Heart left ventricle (tissue), 16 donors: ENCODE measurements at regions of chr1 and their contacts with region 1.

Region 1: DNA sequence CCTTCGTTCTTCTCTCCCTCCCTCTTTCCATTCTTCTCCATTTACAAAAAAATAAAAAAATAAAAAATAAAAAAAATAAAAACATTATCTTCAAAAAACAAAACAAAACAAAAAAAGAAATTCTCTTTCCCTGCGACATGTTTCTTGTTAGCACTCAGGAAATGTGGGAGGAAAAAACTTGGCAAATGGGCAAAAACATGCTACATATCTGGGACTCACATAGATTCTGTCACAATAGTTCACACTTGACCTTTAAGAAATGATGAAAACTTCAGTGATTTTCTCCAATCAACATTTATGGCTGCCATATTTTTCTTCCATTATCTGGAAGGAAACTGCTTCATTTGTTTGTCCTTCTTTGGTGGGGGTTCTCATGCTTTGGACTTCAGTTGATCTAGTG is 109.3 kb downstream of the PRKAB2 start:
- DNase-seq: no peak
- ATAC-seq: no peak
- H3K4me3 ChIP-seq: no peak overlapping the region
- H3K27ac ChIP-seq: no peak overlapping the region
- H3K4me1 ChIP-seq: no peaks in the 10 kb centered on the region
- H3K27me3 ChIP-seq: peaks cover 0 to 10% (median 0%) of the 10 kb centered on the region in 9 donors
- CTCF ChIP-seq: no peak
- POLR2A ChIP-seq: no peak

Region 2: DNA sequence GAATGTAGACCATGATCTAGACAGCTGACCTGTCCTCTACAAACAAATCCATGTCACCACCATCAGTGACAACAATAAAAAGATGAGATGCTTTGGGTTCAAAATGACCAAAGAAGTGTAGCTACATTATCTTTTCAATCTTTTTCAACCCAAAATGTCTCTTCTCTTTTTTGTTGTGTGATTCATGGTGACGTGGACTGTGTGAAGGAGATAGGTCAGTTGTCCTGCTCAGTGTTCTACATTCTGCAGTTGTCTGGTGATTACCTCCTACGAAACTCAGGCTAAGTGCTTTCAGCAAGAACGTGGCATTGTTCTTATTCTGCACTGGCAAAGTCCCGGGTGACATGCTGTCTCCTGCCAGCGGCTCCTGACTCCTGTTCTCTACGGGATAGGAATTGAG is 36.2 kb after region 1 on chr1:
- intact Hi-C with region 1: loop called in 1 of 10 experiments (anchors 5 kb)
- DNase-seq: no peak
- ATAC-seq: no peak
- H3K4me3 ChIP-seq: no peak overlapping the region
- H3K27ac ChIP-seq: no peak overlapping the region
- H3K4me1 ChIP-seq: no peaks in the 10 kb centered on the region
- H3K27me3 ChIP-seq: peaks cover 0 to 24% (median 0%) of the 10 kb centered on the region in 9 donors
- CTCF ChIP-seq: no peak
- POLR2A ChIP-seq: no peak